Activated naive CD4-positive, alpha-beta T cell treated with anti-CD3 and anti-CD28 coated beads for 36 hours (primary cell): ENCODE measurements at regions of chr1 and their contacts with region 1.

Region 1: DNA sequence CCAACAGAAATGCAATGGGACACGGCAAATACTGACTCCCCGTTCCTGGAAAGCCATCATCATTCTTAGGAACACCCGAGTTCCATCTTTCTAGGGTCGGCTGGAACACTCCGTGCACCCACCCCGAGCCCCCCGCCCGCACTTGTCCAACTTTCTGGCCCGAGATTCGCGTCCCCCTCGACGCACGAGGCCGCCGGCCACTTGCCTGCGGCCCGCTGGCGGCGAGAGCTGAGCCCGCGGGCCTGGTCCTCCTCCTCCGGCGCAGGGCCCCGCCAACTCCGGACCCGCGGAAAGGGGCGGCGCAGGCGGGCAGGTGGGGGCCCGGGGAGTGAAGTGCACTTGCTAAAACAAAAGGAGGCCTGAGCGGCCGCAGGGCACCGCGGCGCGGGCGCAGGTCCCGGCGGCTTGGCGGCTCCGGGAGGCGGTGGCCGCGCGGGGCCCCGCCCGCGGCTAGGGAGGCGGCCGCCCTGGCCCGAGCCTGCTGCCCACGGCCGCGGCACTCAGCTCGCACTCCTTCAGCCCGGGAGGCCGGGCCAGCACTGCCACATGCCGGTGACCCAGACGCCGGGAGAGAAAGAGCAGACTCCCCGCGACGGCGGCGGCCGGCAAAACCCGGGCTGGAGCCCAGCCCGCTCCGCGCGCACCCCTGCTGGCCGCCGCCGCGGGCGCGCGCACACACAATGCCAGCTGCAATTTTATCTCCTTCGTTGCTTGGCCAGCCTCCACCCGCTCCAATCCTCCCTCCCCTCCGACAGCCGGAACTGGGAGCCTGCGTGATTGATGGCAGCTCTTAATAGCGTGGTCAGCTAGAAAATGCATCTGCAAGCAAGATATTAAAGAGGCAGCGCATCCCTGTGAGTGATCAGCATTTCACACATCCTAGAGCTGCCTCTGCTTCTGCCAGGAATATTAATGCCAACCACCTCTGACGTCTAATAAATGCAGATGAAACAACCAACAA is 114.3 kb downstream of the RERE start:
- DNase-seq: peak; percentile 72
- H3K4me3 Mint-ChIP-seq: peak overlapping the region; percentile 84
- H3K27ac Mint-ChIP-seq: no peak overlapping the region
- H3K4me1 Mint-ChIP-seq: peaks cover 31% of the 10 kb centered on the region
- H3K27me3 Mint-ChIP-seq: peaks cover 36% of the 10 kb centered on the region

Region 2: GRCh38 chr1:8097077-8097799 is 605.9 kb before region 1 on chr1:
- CTCF ChIA-PET with region 1: no interaction called
- intact Hi-C with region 1: loop called (anchors 5 kb)
- DNase-seq: peak; percentile 53
- H3K4me3 Mint-ChIP-seq: no peak overlapping the region
- H3K27ac Mint-ChIP-seq: peak overlapping the region; percentile 81
- H3K4me1 Mint-ChIP-seq: peaks cover 36% of the 10 kb centered on the region
- H3K27me3 Mint-ChIP-seq: peaks cover 17% of the 10 kb centered on the region

Region 3: GRCh38 chr1:8423650-8424538 is 279.2 kb before region 1 on chr1:
- CTCF ChIA-PET with region 1: no interaction called
- intact Hi-C with region 1: loop called (anchors 2 kb)
- DNase-seq: peak; percentile 62
- H3K4me3 Mint-ChIP-seq: peak overlapping the region; percentile 85
- H3K27ac Mint-ChIP-seq: peak overlapping the region; percentile 97
- H3K4me1 Mint-ChIP-seq: peaks cover 38% of the 10 kb centered on the region
- H3K27me3 Mint-ChIP-seq: no peaks in the 10 kb centered on the region

Region 4: DNA sequence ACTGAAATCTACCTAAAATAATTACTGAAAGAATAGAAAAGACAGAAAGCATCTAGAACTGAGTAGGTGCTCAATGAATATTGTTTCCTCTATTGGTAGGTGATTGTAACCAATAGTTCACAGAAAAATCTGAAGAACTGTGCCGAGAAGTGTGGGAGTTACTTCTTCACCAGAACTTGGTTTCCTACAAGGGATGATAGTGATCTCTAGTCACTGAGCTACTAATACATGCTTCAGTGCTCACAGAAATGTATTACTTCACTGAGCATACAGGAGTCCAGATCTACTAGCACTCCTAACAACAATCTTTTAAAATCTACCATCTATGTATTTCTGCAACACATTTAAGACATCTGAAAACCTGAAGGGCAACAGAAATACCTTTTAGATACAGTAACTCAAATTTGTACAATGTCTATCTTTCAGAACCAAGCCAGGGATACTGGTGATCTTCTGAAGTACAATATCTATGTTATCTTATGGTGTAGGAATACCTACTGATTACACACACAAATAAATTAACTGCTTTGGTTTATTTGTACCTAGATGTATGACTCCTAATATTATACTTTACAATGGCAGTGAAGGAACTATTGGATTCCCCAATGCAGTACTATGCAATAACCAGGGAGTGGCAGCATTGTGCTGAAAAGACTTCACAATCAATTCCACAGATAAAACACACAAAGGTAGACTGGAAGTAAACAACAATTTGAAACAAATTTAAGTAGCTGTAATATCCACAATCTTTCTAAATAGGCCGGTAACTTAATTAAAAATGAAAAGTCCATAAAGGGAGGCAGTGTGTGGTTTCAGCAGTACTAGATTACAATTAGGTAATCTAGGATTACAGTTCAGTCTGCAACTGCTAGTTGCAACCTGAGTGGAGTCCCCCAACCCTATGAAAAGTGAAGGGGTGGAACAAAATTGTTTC is 142.3 kb before region 1 on chr1:
- CTCF ChIA-PET with region 1: interaction called, 5 read pairs
- intact Hi-C with region 1: loop called (anchors 1 kb)
- DNase-seq: peak; percentile 53
- H3K4me3 Mint-ChIP-seq: no peak overlapping the region
- H3K27ac Mint-ChIP-seq: no peak overlapping the region
- H3K4me1 Mint-ChIP-seq: peaks cover 26% of the 10 kb centered on the region
- H3K27me3 Mint-ChIP-seq: no peaks in the 10 kb centered on the region

Region 5: DNA sequence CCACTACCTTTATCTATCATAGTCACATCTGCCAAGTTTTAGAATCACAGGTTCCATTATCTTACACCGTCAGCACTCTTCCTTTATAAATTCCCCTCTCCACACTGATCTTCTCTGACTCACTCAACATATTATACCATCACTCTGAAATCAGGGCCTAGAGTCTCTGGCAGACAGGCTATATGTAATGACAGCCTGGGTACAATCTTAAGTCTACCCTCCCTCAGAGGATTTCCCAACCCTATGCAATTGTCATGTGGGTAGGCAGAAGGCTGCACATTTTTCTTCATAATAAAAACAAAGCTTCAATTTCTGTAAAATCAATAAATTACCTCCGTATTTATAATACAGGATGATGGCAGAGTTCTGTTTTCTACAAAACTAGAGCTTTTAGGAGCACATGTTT is 23.7 kb before region 1 on chr1:
- CTCF ChIA-PET with region 1: no interaction called
- intact Hi-C with region 1: loop called (anchors 1 kb)
- DNase-seq: no peak
- H3K4me3 Mint-ChIP-seq: no peak overlapping the region
- H3K27ac Mint-ChIP-seq: no peak overlapping the region
- H3K4me1 Mint-ChIP-seq: peaks cover 28% of the 10 kb centered on the region
- H3K27me3 Mint-ChIP-seq: no peaks in the 10 kb centered on the region

Region 6: DNA sequence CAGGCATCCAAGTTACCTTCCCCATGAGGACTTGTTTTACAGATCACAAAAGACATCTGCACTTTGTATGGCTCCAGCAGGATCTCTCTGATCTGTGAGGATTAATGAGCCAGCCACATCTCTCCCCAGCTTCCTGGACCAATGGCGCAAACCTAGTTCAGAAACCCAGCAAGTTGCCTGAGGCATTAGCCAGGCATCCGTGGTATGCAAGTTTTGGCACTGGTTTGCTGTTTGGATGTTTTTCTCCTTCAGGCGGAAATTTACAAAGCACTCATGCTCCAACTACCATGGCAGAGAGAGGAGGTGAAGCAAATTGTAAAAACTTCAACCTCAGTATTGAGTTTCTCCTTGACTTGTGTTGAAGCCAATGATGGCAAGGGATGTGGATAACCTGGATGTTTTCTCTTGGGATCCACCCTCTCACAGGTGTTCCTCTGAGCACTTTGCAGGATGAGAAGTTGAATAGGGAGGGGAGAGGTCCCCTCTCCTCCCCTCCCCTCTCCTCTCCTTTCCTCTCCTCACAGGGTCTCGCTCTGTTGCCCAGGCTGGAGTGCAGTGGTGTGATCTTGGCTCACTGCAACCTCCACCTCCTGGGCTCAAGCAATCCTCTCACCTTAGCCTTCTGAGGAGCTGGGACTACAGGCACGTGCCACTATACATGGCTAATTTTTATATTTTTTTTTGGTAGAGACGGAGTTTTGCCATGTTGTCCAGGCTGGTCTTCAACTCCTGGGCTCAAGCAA is 200.9 kb after region 1 on chr1:
- CTCF ChIA-PET with region 1: no interaction called
- intact Hi-C with region 1: loop called (anchors 1 kb)
- DNase-seq: no peak
- H3K4me3 Mint-ChIP-seq: no peak overlapping the region
- H3K27ac Mint-ChIP-seq: no peak overlapping the region
- H3K4me1 Mint-ChIP-seq: peaks cover 48% of the 10 kb centered on the region
- H3K27me3 Mint-ChIP-seq: no peaks in the 10 kb centered on the region